Colonic mucosa (tissue), 4 donors: ENCODE measurements at regions of chr16 and their contacts with region 1.

Region 1: GRCh38 chr16:21158208-21159110 is at the start of gene LDAF1:
- DNase-seq: peak; percentile 93
- H3K4me3 ChIP-seq: peak within 1 kb of the TSS; percentile 85
- H3K27ac ChIP-seq: peak within 1 kb of the TSS; percentile 76
- H3K4me1 ChIP-seq: peaks cover 11% of the 10 kb centered on the region
- H3K27me3 ChIP-seq: no peaks in the 10 kb centered on the region
- CTCF ChIP-seq: no peak
- total RNA-seq, gene LDAF1: 25.6 to 58.2 TPM

Region 2: DNA sequence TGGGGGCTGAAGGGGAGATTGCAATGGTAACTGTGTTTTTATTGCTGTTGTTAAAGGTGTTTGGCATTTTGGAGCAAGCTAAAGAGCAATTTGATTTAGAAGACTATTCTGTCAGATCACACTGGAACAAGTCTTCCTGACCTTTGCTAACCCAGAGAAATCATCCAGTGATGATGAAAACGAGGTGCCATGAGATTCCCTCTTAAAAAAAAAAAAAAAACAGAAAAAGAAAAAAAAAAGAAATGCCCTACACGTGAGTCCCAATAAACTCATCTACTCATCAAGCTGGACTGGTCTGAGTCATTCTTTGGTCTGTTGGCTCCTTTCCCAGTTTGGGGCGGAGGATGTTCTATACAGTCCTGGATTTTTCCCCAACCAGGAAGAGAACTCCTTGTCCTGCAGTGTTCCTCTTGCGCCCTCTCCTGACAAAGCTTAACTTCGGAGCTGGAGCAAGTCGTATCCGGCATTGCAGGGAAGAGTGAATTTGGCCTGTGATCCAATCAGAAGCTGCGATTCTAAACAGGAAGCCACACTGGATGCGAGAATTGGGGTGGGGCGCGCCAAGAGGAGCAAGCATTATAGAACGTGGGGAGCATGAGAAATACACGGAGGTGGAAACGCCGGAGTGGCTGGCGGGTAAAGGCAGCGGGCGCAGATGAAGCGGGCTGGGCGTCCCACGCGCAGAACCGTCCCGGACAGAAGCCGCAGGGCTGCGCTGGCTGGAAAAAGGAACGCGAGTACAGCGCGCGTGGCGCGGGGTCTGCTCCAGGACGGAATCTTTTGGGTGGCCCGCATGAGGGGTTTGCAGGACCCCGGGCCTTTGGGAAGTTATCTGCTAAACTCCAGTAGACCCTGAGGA is 142.1 kb after region 1 on chr16:
- intact Hi-C with region 1: loop called (anchors 5 kb)
- DNase-seq: peak; percentile 100
- H3K4me3 ChIP-seq: peak overlapping the region; percentile 74
- H3K27ac ChIP-seq: peak overlapping the region; percentile 96
- H3K4me1 ChIP-seq: peaks cover 5% of the 10 kb centered on the region
- H3K27me3 ChIP-seq: no peaks in the 10 kb centered on the region
- CTCF ChIP-seq: peak; percentile 62

Region 3: GRCh38 chr16:22321339-22322001 is 1163.0 kb after region 1 on chr16:
- intact Hi-C with region 1: loop called (anchors 10 kb)
- DNase-seq: peak; percentile 58
- H3K4me3 ChIP-seq: no peak overlapping the region
- H3K27ac ChIP-seq: no peak overlapping the region
- H3K4me1 ChIP-seq: no peaks in the 10 kb centered on the region
- H3K27me3 ChIP-seq: no peaks in the 10 kb centered on the region
- CTCF ChIP-seq: peak; percentile 88